ENCODE measurements at regions of chr2 and their contacts with region 1.

Region 1: GRCh38 chr2:237165405-237166276 is 80.0 kb downstream of the COPS8 start:
- DNase-seq: peak in 1 of 2 experiments; percentile 63
- H3K4me3 ChIP-seq: no peak overlapping the region
- H3K27ac ChIP-seq: no peak overlapping the region
- H3K4me1 ChIP-seq: no peaks in the 10 kb centered on the region
- H3K27me3 ChIP-seq: no peaks in the 10 kb centered on the region
- CTCF ChIP-seq: peak; percentile 32 to 85 (median 83)
- EP300 ChIP-seq: no peak
- POLR2A ChIP-seq: no peak
- RAD21 ChIP-seq: peak; percentile 78 to 85

Region 2: DNA sequence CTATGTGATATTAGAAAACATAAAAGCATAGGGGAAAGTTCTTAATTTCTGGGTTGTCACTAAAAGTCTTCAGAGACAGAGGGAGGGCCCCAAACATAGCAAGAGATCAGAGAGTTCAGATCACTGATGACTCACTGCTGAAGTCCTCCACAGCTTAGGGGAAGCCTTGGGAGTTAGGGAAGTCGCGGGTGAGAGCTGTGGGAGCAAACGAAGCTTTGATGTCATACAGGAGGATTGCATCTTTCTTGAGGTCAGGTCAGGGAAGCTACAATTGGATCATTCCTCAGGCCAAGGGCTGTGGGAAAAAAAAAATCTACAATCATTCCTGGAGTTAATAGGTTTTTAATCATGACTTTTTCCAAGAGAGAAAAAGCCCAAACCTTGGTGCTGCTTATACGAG is 16.2 kb after region 1 on chr2:
- CTCF ChIA-PET with region 1: interaction called, 10 read pairs
- POLR2A ChIA-PET with region 1: no interaction called
- DNase-seq: no peak
- H3K4me3 ChIP-seq: no peak overlapping the region
- H3K27ac ChIP-seq: no peak overlapping the region
- H3K4me1 ChIP-seq: no peaks in the 10 kb centered on the region
- H3K27me3 ChIP-seq: no peaks in the 10 kb centered on the region
- CTCF ChIP-seq: no peak
- EP300 ChIP-seq: no peak
- POLR2A ChIP-seq: no peak
- RAD21 ChIP-seq: no peak

Region 3: GRCh38 chr2:237322564-237322963 is 156.9 kb after region 1 on chr2:
- CTCF ChIA-PET with region 1: interaction called, 24 read pairs
- POLR2A ChIA-PET with region 1: no interaction called
- DNase-seq: peak in 1 of 2 experiments; percentile 63
- H3K4me3 ChIP-seq: no peak overlapping the region
- H3K27ac ChIP-seq: no peak overlapping the region
- H3K4me1 ChIP-seq: no peaks in the 10 kb centered on the region; a peak in 1 of 7 replicates
- H3K27me3 ChIP-seq: no peaks in the 10 kb centered on the region; a peak in 1 of 7 replicates
- CTCF ChIP-seq: peak; percentile 72 to 83 (median 82)
- EP300 ChIP-seq: no peak
- POLR2A ChIP-seq: no peak
- RAD21 ChIP-seq: peak; percentile 67 to 73

Region 4: DNA sequence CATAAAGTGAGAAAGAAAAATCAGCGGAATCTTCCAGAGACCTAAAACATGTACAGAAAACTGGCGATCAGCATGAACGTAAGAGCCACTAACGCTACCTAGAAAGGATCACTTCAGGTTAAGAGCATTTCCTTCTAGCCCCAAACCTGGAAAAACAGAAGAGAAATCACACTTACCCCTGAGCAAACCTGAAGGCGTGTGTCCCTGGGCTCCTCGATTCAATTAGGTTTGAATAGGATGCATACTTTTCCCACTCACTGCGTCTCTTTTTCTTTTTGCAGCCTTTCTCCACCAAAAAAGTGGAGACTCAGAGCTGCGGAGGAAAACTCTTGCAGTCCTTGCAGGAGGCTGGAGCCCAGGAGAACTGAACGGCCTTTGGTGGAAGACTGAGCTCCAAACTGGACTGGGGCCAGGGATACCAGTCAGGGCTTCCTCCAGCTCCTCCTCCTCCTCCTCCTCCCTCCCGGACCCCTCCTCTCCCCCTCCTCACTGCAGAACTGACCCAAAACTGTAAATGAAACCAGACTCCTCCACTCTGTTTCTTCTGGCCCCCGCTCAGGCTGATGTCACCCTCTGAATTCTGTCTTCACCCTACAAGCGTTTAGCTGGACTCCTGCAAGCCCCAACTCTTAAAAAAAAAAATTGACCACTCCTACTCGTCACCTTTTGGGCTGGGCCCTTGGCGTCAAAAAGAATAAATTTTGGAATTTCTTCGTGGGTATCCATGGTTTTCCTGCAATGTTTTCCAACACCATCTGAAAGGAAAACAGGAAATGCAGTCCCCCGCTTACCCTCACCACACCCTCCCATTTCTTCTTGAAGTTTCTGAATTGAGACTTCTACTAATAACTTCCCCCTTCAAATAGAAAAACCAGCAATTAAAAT is 248.4 kb after region 1 on chr2 and contains the start of gene COL6A3:
- CTCF ChIA-PET with region 1: interaction called, 33 read pairs
- POLR2A ChIA-PET with region 1: no interaction called
- DNase-seq: no peak
- H3K4me3 ChIP-seq: no peak within 1 kb of the TSS
- H3K27ac ChIP-seq: no peak within 1 kb of the TSS
- H3K4me1 ChIP-seq: peaks cover 0 to 6% (median under 1%) of the 10 kb centered on the region in 4 experiments; a peak in 3 of 7 replicates
- H3K27me3 ChIP-seq: no peaks in the 10 kb centered on the region
- CTCF ChIP-seq: no peak
- EP300 ChIP-seq: no peak
- POLR2A ChIP-seq: no peak
- RAD21 ChIP-seq: no peak
- total RNA-seq, gene COL6A3: 3.4 and 3.5 TPM in 2 replicates

Region 5: DNA sequence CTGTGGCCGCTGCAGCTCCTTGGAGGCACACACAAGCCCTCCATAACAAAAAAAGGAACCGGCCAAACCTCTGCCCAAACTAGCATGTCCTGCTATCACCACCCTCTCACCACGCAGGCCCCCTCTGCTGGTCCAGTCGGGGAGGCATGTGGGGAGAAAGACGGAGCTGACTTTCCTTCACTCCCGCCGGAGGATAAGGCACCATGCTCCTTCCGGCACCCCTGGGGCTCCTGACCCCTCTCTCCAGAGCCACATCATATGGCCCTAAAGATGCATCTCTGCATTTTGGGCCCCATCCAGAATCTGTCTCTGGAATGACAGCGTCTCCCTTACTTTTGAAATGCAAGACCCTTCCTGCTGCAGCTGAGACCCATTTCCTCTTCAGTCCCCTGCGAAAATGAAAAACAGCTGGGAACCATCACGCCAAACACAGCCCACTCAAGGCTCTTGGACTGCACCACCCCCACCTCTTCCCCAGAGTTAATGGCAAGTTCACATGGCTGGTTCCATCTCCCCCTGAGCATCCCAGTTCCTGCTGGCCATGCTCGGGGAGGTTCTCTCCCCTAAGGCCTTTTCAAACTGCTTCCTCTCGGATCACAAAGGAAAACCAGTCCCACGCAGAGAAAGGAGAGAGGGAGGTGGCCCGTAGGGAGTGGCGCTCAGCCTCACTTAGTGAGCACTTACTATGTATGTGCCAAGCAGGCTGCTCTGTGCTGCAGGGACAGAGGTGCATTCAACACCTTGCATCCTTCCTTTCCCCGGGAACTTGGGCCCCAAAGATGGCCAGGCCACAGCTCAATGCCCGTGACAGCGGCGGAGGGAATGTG is 286.2 kb after region 1 on chr2:
- CTCF ChIA-PET with region 1: interaction called, 12 read pairs
- POLR2A ChIA-PET with region 1: no interaction called
- DNase-seq: peak in 1 of 2 experiments; percentile 70
- H3K4me3 ChIP-seq: no peak overlapping the region
- H3K27ac ChIP-seq: no peak overlapping the region
- H3K4me1 ChIP-seq: peaks cover 0 to 6% (median 4%) of the 10 kb centered on the region in 4 experiments; a peak in 4 of 7 replicates
- H3K27me3 ChIP-seq: peaks cover 0 to 2% (median 0%) of the 10 kb centered on the region in 4 experiments; a peak in 1 of 7 replicates
- CTCF ChIP-seq: peak; percentile 62 to 71 (median 63)
- EP300 ChIP-seq: no peak
- POLR2A ChIP-seq: no peak
- RAD21 ChIP-seq: peak; percentile 54 to 60